CD4-positive, alpha-beta memory T cell (primary cell): ENCODE measurements at regions of chr20 and their contacts with region 1.

Region 1: GRCh38 chr20:41136680-41137613 is at the start of gene PLCG1:
- DNase-seq: peak; percentile 79 to 87 (median 82)
- H3K4me3 ChIP-seq: peak within 1 kb of the TSS; percentile 82
- H3K4me3 Mint-ChIP-seq: peak within 1 kb of the TSS; percentile 93 to 99 (median 96)
- H3K27ac ChIP-seq: peak within 1 kb of the TSS; percentile 84
- H3K27ac Mint-ChIP-seq: peak within 1 kb of the TSS; percentile 89 to 98 (median 95)
- H3K4me1 ChIP-seq: peaks cover 65% of the 10 kb centered on the region
- H3K4me1 Mint-ChIP-seq: peaks cover 43 to 70% (median 62%) of the 10 kb centered on the region in 4 donors
- H3K27me3 ChIP-seq: no peaks in the 10 kb centered on the region
- H3K27me3 Mint-ChIP-seq: no peaks in the 10 kb centered on the region
- total RNA-seq, gene PLCG1: 319 to 320 TPM

Region 2: DNA sequence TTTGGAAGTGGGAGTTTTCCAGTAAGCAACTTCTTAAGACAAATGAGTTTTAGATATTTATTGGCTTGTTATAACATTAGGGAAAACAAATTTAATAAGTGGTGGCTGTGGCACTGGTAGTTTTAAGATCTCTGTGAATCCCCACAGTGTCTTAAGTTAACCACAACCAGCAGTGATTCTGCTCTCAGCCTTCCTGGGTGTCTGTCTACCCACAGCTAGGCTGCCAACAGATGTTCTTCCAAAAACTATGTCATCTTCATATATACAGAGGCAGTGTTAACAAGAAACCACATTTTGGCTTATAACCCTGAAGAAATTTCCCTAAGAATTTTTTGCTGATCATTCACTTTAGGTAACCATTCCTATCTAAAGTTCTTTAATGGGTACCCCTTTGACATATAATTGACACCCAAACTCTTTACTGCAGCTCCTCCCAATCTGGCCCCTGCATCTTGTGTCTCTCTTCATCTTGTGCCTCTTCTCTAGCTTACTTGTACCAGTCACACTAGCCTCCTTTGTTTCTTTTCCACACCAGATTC is 55.6 kb before region 1 on chr20:
- CTCF ChIA-PET with region 1: no interaction called
- POLR2A ChIA-PET with region 1: no interaction called
- intact Hi-C with region 1: no loop called
- DNase-seq: no peak
- H3K4me3 ChIP-seq: no peak overlapping the region
- H3K4me3 Mint-ChIP-seq: peak overlapping the region in 1 of 8 donors; percentile 34
- H3K27ac ChIP-seq: no peak overlapping the region
- H3K27ac Mint-ChIP-seq: peak overlapping the region in 6 of 7 donors; percentile 9 to 61 (median 38)
- H3K4me1 ChIP-seq: peaks cover 32% of the 10 kb centered on the region
- H3K4me1 Mint-ChIP-seq: peaks cover 31 to 54% (median 44%) of the 10 kb centered on the region in 4 donors
- H3K27me3 ChIP-seq: no peaks in the 10 kb centered on the region
- H3K27me3 Mint-ChIP-seq: no peaks in the 10 kb centered on the region

Region 3: GRCh38 chr20:41119546-41120235 is 17.3 kb before region 1 on chr20:
- CTCF ChIA-PET with region 1: interaction called, 33 read pairs
- POLR2A ChIA-PET with region 1: interaction called, 4 read pairs
- intact Hi-C with region 1: no loop called
- DNase-seq: no peak
- H3K4me3 ChIP-seq: no peak overlapping the region
- H3K4me3 Mint-ChIP-seq: no peak overlapping the region
- H3K27ac ChIP-seq: no peak overlapping the region
- H3K27ac Mint-ChIP-seq: peak overlapping the region in 1 of 7 donors; percentile 29
- H3K4me1 ChIP-seq: no peaks in the 10 kb centered on the region
- H3K4me1 Mint-ChIP-seq: peaks cover 5 to 15% (median 9%) of the 10 kb centered on the region in 4 donors
- H3K27me3 ChIP-seq: no peaks in the 10 kb centered on the region
- H3K27me3 Mint-ChIP-seq: no peaks in the 10 kb centered on the region

Region 4: DNA sequence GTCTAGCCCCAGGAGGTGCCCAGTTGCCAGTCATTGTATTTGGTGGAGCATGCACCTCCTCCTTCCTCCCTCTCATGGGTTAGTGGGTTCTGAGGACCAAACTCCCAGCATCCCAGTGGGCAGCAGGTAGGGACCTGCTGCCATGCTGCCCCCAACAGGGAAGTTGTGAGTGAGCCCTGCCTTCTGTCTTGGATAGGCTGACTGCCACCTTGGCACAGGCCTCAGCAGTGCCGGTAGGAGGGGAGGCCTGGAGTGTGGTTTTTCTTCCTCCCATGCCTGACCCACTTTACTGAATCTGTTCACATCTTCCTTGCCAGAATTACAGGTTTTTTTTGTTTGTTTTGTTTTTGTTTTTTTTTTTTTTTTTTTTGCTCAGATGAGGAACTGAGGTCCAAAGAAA is 24.9 kb after region 1 on chr20:
- CTCF ChIA-PET with region 1: interaction called, 178 read pairs
- POLR2A ChIA-PET with region 1: interaction called, 753 read pairs
- intact Hi-C with region 1: loop called (anchors 1 kb)
- DNase-seq: peak in 2 of 5 donors; percentile 41 to 43
- H3K4me3 ChIP-seq: no peak overlapping the region
- H3K4me3 Mint-ChIP-seq: peak overlapping the region in 7 of 8 donors; percentile 26 to 86 (median 51)
- H3K27ac ChIP-seq: peak overlapping the region; percentile 73
- H3K27ac Mint-ChIP-seq: peak overlapping the region; percentile 87 to 99 (median 89)
- H3K4me1 ChIP-seq: peaks cover 64% of the 10 kb centered on the region
- H3K4me1 Mint-ChIP-seq: peaks cover 55 to 92% (median 70%) of the 10 kb centered on the region in 4 donors
- H3K27me3 ChIP-seq: no peaks in the 10 kb centered on the region
- H3K27me3 Mint-ChIP-seq: peaks cover 0 to 2% of the 10 kb centered on the region in 2 donors

Region 5: DNA sequence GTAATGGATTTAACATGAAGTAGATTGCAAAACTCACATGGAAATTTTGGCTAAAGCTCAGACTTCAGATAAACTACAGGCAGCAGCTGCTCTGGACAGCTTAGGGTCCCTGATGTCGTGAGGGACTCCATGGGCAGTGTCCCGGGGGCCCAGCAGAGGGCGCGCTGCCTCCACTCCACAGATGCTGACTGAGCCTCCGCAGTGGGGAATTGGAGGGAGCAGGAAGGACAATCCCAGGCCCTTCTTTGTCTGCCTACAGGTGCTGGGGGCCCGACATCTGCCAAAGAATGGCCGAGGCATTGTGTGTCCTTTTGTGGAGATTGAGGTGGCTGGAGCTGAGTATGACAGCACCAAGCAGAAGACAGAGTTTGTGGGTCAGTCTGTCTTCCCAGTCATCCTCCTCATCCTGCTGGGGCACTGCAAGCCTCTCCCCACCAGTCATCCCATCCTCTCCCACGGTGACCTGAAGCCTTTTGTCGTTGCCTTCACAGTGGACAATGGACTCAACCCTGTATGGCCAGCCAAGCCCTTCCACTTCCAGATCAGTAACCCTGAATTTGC is 36.3 kb after region 1 on chr20:
- CTCF ChIA-PET with region 1: interaction called, 69 read pairs
- POLR2A ChIA-PET with region 1: interaction called, 22 read pairs
- intact Hi-C with region 1: loop called (anchors 1 kb)
- DNase-seq: peak; percentile 50 to 61 (median 54)
- H3K4me3 ChIP-seq: no peak overlapping the region
- H3K4me3 Mint-ChIP-seq: no peak overlapping the region
- H3K27ac ChIP-seq: no peak overlapping the region
- H3K27ac Mint-ChIP-seq: peak overlapping the region in 6 of 7 donors; percentile 8 to 82 (median 56)
- H3K4me1 ChIP-seq: no peaks in the 10 kb centered on the region
- H3K4me1 Mint-ChIP-seq: peaks cover 0 to 29% (median 13%) of the 10 kb centered on the region in 4 donors
- H3K27me3 ChIP-seq: no peaks in the 10 kb centered on the region
- H3K27me3 Mint-ChIP-seq: no peaks in the 10 kb centered on the region

Region 6: DNA sequence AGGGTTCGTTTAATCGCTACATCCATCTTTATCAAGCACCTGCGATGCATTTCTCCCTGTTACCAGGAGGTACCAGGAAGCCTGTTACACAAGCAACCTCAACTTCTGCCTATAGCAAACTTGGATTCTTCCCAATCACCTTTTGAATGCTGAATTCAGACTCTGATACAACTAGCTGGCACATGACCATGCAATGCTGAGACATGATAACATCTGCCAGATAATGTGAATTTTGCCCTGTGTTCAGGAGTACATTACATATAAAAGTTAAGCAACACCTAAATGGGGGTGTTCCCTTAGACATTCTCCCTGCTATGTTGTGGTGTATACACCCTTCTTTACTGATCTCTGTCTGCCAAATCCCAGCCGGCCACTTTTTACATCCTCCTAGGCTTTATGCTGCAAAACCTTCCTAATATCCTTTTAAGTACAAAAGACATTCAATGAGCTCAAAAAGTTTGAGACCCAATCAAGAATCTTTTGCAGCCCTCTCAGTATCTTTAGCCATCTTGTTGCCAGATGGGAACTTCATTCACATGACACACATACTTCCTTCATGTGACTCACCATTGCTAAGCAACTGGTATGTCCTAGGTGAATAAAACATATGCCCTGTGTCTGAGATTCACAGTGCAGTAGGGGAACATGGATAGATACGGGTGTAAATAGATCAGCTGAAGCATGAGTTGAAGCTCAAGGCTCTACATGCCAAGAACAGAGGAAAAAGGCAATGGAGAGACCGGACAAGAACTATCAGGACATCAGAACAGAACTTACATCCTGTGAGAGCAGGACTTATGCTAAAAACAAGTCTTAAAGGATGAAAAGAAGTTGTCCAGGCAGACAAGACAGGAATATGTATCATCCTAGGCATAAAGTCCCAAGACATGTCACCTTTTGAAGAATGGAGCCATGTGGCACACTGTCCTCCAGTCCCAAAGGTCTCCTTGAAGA is 96.3 kb after region 1 on chr20:
- CTCF ChIA-PET with region 1: interaction called, 201 read pairs
- POLR2A ChIA-PET with region 1: interaction called, 22 read pairs
- intact Hi-C with region 1: loop called (anchors 1 kb)
- DNase-seq: no peak
- H3K4me3 ChIP-seq: no peak overlapping the region
- H3K4me3 Mint-ChIP-seq: peak overlapping the region in 1 of 8 donors; percentile 70
- H3K27ac ChIP-seq: no peak overlapping the region
- H3K27ac Mint-ChIP-seq: peak overlapping the region in 2 of 7 donors; percentile 35 to 54
- H3K4me1 ChIP-seq: peaks cover 7% of the 10 kb centered on the region
- H3K4me1 Mint-ChIP-seq: peaks cover 8 to 24% (median 14%) of the 10 kb centered on the region in 4 donors
- H3K27me3 ChIP-seq: no peaks in the 10 kb centered on the region
- H3K27me3 Mint-ChIP-seq: no peaks in the 10 kb centered on the region

Region 7: DNA sequence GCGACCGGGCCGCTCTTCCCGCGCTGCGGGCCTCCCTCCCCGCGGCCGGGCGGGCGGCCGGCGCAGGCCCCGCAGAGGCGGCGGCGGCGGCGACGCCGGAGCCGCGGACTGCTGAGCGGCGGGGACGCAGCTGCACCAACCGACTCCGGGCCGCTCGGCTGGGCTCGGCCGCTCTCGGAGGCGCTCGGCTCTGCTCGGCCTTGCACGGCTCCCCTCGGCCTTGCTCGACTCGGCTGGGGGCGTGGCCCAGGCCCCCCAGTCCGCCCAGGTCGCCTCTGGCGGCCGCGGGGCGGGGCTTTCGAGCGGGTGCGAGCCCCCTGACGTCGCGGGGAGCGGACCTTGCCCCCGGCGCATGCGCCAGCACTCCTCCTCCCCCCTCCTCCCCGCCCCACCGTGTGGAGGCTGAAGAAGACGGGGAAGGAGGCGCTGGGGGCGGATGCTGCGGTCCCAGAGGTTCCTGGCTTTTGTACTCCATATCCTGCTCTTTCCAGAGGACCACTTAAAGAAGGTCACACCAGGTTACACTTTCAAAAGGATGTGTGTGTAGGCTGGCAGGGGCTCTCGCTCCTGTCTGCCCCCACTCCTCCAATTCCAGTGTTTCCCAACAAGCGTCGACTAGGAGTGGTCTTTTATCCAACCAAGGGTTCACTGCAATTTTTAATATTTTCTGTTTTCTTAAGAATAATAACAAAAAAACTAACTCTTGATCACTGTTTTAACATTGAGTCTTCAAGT is 180.8 kb after region 1 on chr20 and contains the start of gene ZHX3:
- CTCF ChIA-PET with region 1: interaction called, 10 read pairs
- POLR2A ChIA-PET with region 1: interaction called, 10 read pairs
- intact Hi-C with region 1: loop called (anchors 1 kb)
- DNase-seq: peak; percentile 91 to 97 (median 95)
- H3K4me3 ChIP-seq: peak within 1 kb of the TSS; percentile 21 to 74
- H3K4me3 Mint-ChIP-seq: peak within 1 kb of the TSS; percentile 85 to 90 (median 87)
- H3K27ac ChIP-seq: peak within 1 kb of the TSS; percentile 48
- H3K27ac Mint-ChIP-seq: peak within 1 kb of the TSS; percentile 79 to 90 (median 84)
- H3K4me1 ChIP-seq: peaks cover 16% of the 10 kb centered on the region
- H3K4me1 Mint-ChIP-seq: peaks cover 7 to 27% (median 18%) of the 10 kb centered on the region in 4 donors
- H3K27me3 ChIP-seq: no peaks in the 10 kb centered on the region
- H3K27me3 Mint-ChIP-seq: no peaks in the 10 kb centered on the region
- total RNA-seq, gene ZHX3: 5.2 to 6.3 TPM

Region 8: GRCh38 chr20:41617931-41618806 is 481.2 kb after region 1 on chr20 and contains the start of gene CHD6:
- CTCF ChIA-PET with region 1: no interaction called
- POLR2A ChIA-PET with region 1: no interaction called
- intact Hi-C with region 1: loop called (anchors 5 kb)
- DNase-seq: peak; percentile 99 to 100 (median 100)
- H3K4me3 ChIP-seq: peak within 1 kb of the TSS; percentile 7 to 69
- H3K4me3 Mint-ChIP-seq: peak within 1 kb of the TSS; percentile 92 to 95 (median 94)
- H3K27ac ChIP-seq: peak within 1 kb of the TSS; percentile 41
- H3K27ac Mint-ChIP-seq: peak within 1 kb of the TSS; percentile 88 to 96 (median 91)
- H3K4me1 ChIP-seq: peaks cover 41% of the 10 kb centered on the region
- H3K4me1 Mint-ChIP-seq: peaks cover 33 to 51% (median 38%) of the 10 kb centered on the region in 4 donors
- H3K27me3 ChIP-seq: no peaks in the 10 kb centered on the region
- H3K27me3 Mint-ChIP-seq: no peaks in the 10 kb centered on the region
- total RNA-seq, gene CHD6: 93.2 to 96.8 TPM